OCI-LY7 (cell line): ENCODE measurements at regions of chr5 and their contacts with region 1.

Region 1: DNA sequence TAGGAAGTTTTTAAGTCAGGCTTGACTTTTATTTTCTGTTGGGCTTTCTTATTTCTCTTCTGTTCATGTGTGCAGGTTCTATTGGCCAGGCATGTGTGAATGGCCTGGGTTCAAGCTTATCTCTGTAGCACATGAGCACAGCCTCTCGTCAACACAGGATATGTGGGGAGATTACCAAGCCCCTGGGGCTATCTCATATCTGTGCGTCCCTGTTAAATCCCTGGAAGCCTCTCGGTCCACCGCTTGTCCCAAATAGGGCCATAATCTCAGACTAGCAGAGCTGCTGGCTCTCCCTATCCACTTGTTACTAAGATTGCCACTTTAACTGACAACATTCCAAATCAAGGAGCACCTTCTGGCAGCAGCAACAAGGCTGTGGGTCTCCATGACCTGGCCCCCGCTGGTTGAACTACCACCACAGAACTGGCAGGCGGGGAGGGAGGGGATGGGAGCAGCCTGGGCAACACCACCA is 28.4 kb upstream of the EBF1 start:
- DNase-seq: no peak
- H3K4me3 ChIP-seq: no peak overlapping the region
- H3K27ac ChIP-seq: no peak overlapping the region
- H3K4me1 ChIP-seq: no peaks in the 10 kb centered on the region
- CTCF ChIP-seq: no peak

Region 2: GRCh38 chr5:158154226-158155005 is 973.7 kb before region 1 on chr5:
- CTCF ChIA-PET with region 1: no interaction called
- POLR2A ChIA-PET with region 1: interaction called, 3 read pairs
- intact Hi-C with region 1: loop called (anchors 5 kb)
- DNase-seq: no peak
- H3K4me3 ChIP-seq: no peak overlapping the region
- H3K27ac ChIP-seq: no peak overlapping the region
- H3K4me1 ChIP-seq: no peaks in the 10 kb centered on the region
- CTCF ChIP-seq: no peak

Region 3: GRCh38 chr5:159386028-159386711 is 258.1 kb after region 1 on chr5:
- CTCF ChIA-PET with region 1: no interaction called
- POLR2A ChIA-PET with region 1: no interaction called
- intact Hi-C with region 1: no loop called
- DNase-seq: peak; percentile 11
- H3K4me3 ChIP-seq: no peak overlapping the region
- H3K27ac ChIP-seq: no peak overlapping the region
- H3K4me1 ChIP-seq: no peaks in the 10 kb centered on the region
- CTCF ChIP-seq: no peak